ENCODE measurements at regions of chr21 and their contacts with region 1.

Region 1: DNA sequence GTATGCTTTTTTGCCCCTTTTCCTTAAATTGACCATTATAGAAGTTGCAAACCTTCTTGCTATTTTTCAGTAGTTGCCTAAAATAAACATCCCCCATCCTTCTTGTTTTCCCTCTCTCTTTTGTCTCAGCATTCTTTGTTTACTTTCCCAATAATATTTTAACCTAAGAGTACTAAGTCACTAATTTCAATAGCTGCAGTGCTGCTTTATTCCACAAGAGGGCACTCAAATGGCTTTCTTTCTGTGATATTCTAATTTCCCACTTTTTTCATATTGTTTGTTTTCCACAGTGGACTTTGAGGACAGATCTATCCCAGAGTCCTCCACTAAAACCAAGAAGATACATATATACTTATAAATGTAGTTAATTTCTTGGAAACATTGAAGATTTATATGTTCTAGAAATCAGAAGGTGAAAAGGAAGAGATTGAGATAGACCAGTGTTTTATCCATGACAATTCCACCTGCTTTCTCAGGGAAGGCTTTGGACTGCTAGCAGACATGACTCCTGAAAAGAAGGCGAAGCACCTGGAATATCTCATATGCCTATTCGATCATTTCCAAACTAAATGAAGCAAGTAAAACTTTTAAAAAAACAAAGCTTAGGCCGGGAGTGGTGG is 104.8 kb upstream of the GRIK1 start:
- DNase-seq: peak in 1 of 2 experiments; percentile 3
- H3K4me3 ChIP-seq: no peak overlapping the region
- H3K27ac ChIP-seq: no peak overlapping the region
- H3K4me1 ChIP-seq: no peaks in the 10 kb centered on the region
- H3K27me3 ChIP-seq: no peaks in the 10 kb centered on the region
- CTCF ChIP-seq: peak; percentile 89

Region 2: GRCh38 chr21:30194701-30195299 is 150.2 kb after region 1 on chr21:
- CTCF ChIA-PET with region 1: no interaction called
- POLR2A ChIA-PET with region 1: no interaction called
- intact Hi-C with region 1: loop called (anchors 2 kb)
- DNase-seq: peak in 1 of 2 experiments; percentile 41
- H3K4me3 ChIP-seq: no peak overlapping the region
- H3K27ac ChIP-seq: no peak overlapping the region
- H3K4me1 ChIP-seq: no peaks in the 10 kb centered on the region
- H3K27me3 ChIP-seq: no peaks in the 10 kb centered on the region
- CTCF ChIP-seq: peak; percentile 74

Region 3: DNA sequence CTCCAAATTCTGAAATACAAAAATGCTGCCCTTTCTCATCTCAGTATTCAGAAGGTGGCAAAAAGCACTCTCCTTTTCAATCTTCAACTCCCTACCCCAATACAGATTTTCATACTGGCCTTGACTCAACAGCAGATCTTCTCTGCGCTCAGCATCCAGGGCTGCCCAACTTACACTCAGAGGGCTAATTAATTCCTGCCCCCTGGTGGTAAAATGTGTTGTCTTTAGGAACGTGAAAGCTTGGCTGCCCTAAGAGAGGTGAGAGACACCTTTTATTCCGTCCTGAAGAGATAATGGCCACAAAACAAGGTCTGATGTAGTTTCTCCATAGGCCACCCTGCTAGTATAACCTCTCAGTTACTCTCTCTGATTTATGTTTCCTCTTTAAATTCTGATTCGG is 213.2 kb after region 1 on chr21:
- CTCF ChIA-PET with region 1: no interaction called
- POLR2A ChIA-PET with region 1: no interaction called
- intact Hi-C with region 1: loop called (anchors 5 kb)
- DNase-seq: peak in 1 of 2 experiments; percentile 12
- H3K4me3 ChIP-seq: no peak overlapping the region
- H3K27ac ChIP-seq: no peak overlapping the region
- H3K4me1 ChIP-seq: no peaks in the 10 kb centered on the region
- H3K27me3 ChIP-seq: no peaks in the 10 kb centered on the region
- CTCF ChIP-seq: peak; percentile 51

Region 4: DNA sequence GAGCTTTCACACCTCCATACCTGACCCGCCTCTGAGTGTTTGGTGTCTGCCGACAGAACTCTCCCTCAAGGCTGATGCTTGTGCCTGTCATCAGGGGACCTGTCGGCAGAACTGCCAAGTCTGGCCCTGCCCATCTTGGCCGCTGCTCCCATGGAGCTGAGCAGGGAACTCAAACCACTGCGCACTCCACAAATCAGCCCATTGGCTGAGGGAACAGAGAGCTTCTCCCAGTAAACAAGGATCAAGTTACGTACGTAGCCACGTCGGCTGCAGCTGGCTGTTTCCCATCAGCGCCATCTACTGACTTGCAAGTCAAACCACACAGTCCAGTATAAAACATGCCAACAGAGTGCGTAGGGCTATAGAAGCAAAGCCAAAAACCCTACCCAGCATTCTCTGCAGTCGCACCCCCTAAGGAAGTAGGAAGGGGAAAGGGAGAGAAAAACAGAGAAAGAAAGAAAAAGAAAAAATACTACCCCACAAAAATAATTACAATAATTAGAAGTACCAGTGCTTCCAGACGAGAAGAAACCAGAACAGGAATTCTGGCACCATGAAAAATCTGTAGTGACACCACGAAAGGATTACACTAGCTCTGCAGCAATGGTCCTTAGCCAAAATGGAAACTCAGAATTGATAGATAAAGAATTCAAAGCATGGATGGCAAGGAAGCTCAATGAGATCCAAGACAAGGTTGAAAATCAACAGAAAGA is 364.4 kb after region 1 on chr21:
- CTCF ChIA-PET with region 1: no interaction called
- POLR2A ChIA-PET with region 1: no interaction called
- intact Hi-C with region 1: loop called (anchors 5 kb)
- DNase-seq: peak; percentile 46 to 49
- H3K4me3 ChIP-seq: no peak overlapping the region
- H3K27ac ChIP-seq: no peak overlapping the region
- H3K4me1 ChIP-seq: no peaks in the 10 kb centered on the region
- H3K27me3 ChIP-seq: no peaks in the 10 kb centered on the region
- CTCF ChIP-seq: peak; percentile 51; the same call in 1 of the 2 replicates

Region 5: DNA sequence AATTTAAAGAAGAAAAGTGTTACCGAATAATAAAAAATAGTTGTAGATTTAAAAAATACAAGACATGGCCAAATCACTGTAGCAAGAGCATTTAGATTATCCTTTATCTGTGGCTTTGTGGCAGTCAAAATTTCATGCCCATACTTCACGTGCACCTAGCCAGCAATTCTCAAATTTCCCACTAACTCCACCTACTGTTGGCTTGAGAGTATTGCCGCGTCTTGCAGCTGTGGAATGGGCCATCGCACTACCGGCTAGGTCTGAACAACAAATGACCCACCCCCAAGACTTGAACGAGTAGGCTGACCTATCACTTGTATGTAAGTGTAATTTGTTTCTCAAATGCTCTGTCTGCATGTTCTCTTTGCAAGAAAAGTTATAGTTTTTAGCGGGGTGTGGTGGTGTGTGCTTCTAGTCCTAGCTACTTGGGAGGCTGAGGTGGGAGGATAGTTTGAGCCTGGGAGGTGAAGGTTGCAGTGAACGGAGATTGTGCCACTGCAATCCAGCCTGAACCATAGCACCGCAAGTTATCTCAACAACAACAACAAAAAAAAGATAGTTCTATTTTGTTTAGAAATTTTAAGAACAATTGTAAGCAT is 389.6 kb after region 1 on chr21:
- CTCF ChIA-PET with region 1: no interaction called
- POLR2A ChIA-PET with region 1: no interaction called
- intact Hi-C with region 1: loop called (anchors 10 kb)
- DNase-seq: peak in 1 of 2 experiments; percentile 4
- H3K4me3 ChIP-seq: no peak overlapping the region
- H3K27ac ChIP-seq: no peak overlapping the region
- H3K4me1 ChIP-seq: no peaks in the 10 kb centered on the region
- H3K27me3 ChIP-seq: no peaks in the 10 kb centered on the region
- CTCF ChIP-seq: peak; percentile 64

Region 6: GRCh38 chr21:30747159-30747558 is 702.6 kb after region 1 on chr21 and contains the start of gene KRTAP21-2:
- CTCF ChIA-PET with region 1: no interaction called
- POLR2A ChIA-PET with region 1: no interaction called
- intact Hi-C with region 1: no loop called
- DNase-seq: no peak
- H3K4me3 ChIP-seq: no peak within 1 kb of the TSS
- H3K27ac ChIP-seq: no peak within 1 kb of the TSS
- H3K4me1 ChIP-seq: no peaks in the 10 kb centered on the region
- H3K27me3 ChIP-seq: no peaks in the 10 kb centered on the region
- CTCF ChIP-seq: no peak
- total RNA-seq, gene KRTAP21-2: not detected in 2 replicates

Region 7: DNA sequence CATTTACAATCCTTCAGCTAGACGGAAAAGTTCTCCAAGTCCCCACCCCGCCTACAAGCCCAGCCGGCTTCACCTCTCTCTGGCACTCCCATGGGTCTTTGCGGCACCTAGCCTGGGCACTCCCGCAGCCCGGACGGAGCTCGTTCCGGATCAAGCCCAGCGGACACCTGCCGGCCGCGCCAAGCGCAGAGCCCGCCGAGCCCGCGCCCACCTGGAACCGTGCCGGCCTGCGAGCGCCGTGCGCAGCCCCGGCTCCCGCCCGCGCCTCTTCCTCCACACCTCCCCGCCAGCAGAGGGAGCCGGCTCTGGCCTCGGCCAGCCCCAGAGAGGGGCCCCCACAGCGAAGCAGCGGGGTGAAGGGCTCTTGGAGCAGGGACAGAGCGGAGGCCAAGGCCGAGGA is 1043.8 kb after region 1 on chr21:
- CTCF ChIA-PET with region 1: no interaction called
- POLR2A ChIA-PET with region 1: no interaction called
- intact Hi-C with region 1: loop called (anchors 10 kb)
- DNase-seq: no peak
- H3K4me3 ChIP-seq: no peak overlapping the region
- H3K27ac ChIP-seq: no peak overlapping the region
- H3K4me1 ChIP-seq: no peaks in the 10 kb centered on the region
- H3K27me3 ChIP-seq: peaks cover 7% of the 10 kb centered on the region; the same call in 1 of the 2 replicates
- CTCF ChIP-seq: no peak

Measured in PC-9 (cell line).